ENCODE measurements at regions of chr22 and their contacts with region 1.

Region 1: DNA sequence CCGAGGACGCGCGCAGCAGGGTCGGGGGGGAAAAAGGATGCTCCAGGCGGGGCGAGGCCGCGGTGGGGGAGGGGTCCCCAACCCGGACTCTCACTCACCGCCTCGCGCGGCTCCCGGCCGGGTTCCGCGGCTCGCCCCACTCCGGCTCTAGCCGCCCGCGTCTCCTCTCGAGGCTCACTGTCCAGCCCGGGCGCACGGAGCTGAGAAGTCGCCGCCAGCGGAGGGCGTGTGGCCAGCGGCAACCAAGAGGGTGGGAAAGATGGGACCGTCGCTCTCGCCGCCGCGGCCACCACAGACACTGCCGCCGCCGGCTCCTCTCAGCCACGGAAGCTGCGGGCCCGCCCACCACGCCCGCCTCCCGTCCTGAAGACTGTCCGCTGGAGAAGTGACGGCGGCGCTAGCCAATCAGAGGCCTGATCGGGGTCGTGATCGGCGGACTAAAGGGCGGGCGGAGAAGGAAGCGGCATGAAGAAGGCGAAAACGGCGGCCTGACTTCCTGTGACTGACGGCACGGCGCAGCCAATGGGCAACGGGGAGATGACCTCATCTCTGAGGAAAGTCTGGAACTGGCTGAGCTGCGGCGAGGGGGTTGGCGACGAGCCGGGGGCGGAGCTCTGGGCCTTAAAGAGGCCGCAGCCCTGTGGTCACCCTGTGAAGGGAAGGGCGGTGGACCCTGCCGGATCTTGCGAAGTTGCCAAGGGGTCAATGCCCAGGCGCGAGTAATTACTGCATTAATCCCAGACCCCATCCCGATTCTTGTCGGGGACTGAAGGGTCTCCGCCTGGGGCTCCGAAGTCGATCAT is at the start of gene MRTFA:
- DNase-seq: peak; percentile 100
- H3K4me3 ChIP-seq: peak within 1 kb of the TSS; percentile 99
- H3K27ac ChIP-seq: peak within 1 kb of the TSS; percentile 90 to 93
- H3K4me1 ChIP-seq: no peaks in the 10 kb centered on the region
- H3K27me3 ChIP-seq: no peaks in the 10 kb centered on the region
- CTCF ChIP-seq: no peak
- EP300 ChIP-seq: no peak
- POLR2A ChIP-seq: peak; percentile 99
- total RNA-seq, gene MRTFA: 41.6 to 59.7 (median 55.0) TPM

Region 2: DNA sequence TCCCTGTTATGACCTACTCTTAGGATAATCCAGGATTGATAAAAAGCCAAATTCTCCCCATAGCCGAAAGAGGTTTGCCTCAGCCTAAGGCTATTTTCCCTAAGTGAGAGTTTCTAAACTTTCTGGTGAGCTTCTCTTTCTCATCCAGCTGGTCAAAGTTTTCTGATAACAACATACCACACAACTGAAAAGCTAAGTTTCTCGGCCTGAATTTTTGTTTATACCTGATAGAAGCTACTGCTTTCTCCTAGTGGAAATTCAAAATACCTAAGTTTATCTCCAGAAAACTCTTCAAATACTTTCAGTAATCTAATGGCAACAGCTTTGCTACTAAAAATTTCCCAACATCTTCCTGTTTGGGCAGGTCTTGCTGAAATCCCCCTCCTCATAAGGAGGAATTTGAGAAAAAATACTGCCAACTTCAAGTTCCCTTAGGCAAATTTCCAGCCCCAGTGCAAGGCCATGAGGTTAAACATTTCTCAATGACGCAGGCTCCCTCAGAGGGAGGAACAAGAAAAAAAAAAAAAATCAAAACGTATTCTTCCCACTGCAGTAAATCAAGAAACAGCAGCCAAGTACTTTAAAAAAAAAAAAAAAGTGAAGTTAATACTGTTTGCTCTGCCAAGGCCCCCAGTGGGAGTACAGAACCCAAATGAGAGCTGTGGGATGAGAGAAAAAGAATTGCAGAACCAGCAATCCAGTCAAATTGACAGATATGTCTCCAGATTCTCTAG is 127.0 kb before region 1 on chr22:
- intact Hi-C with region 1: loop called in 2 of 4 experiments (anchors 10 kb)
- DNase-seq: peak; percentile 70 to 84 (median 77)
- H3K4me3 ChIP-seq: no peak overlapping the region
- H3K27ac ChIP-seq: peak overlapping the region; percentile 64 to 86
- H3K4me1 ChIP-seq: peaks cover 16% of the 10 kb centered on the region
- H3K27me3 ChIP-seq: no peaks in the 10 kb centered on the region
- CTCF ChIP-seq: no peak
- EP300 ChIP-seq: no peak
- POLR2A ChIP-seq: peak; percentile 17

Region 3: DNA sequence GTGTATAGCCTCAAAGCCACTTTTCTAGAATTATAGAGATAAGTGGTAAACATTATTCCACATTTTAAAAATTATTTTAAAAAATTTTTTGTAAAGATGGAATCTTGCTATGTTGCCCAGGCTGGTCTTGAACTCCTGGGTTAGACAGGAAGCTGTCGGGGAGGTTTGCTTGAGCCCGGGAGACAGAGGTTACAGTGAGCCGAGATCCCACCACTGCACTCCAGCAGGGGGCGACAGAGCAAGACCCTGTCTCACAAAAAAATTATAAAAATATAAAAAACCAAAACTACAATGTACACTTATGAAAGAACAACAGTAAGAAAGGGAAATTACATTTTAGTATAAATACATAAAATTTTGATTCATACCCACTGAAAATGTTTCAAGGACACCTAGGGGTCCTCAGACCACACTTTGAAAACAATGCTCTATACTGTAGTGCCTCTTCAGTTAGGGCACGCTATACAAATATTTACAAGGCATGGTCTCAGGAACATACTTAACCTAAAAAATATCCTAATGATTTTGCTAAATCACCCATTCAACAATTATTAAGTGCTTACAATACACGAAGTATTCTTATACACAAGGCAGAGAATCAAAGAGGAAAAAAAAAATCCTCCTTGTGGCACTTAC is 111.2 kb before region 1 on chr22:
- intact Hi-C with region 1: loop called in 2 of 4 experiments (anchors 10 kb)
- DNase-seq: peak; percentile 26 to 71 (median 55)
- H3K4me3 ChIP-seq: no peak overlapping the region
- H3K27ac ChIP-seq: no peak overlapping the region
- H3K4me1 ChIP-seq: peaks cover 1% of the 10 kb centered on the region
- H3K27me3 ChIP-seq: no peaks in the 10 kb centered on the region
- CTCF ChIP-seq: peak; percentile 16 to 40 (median 37)
- EP300 ChIP-seq: no peak
- POLR2A ChIP-seq: no peak

Region 4: GRCh38 chr22:40603088-40603605 is 33.4 kb before region 1 on chr22:
- intact Hi-C with region 1: no loop called
- DNase-seq: no peak
- H3K4me3 ChIP-seq: no peak overlapping the region
- H3K27ac ChIP-seq: no peak overlapping the region
- H3K4me1 ChIP-seq: peaks cover 14% of the 10 kb centered on the region
- H3K27me3 ChIP-seq: no peaks in the 10 kb centered on the region
- CTCF ChIP-seq: no peak
- EP300 ChIP-seq: no peak
- POLR2A ChIP-seq: no peak

Measured in ovary (tissue), 10 donors.